ENCODE measurements at regions of chr10 and their contacts with region 1.

Region 1: DNA sequence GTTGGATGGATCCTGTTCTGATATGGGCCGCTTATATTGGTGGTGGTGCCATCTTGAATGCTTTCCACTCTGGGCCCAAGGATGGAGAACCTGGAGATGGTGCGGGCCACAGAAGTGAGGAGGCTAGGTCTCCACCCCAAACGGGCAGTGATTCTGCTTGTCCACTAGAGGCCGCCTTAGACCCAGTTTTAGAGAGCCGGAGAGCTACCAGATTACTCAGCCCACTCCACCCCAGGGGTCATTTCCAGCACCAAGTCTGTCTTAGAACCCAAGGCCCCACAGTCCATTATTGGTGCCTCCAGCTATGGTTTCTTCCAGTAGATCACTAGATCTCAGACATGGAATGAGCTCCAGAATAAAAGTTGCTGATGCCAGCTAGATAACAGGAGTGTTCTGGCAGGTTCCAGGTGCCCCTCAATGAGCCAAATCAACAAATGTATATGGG is 11.8 kb upstream of the CAMK2G start:
- DNase-seq: no peak
- H3K4me3 ChIP-seq: no peak overlapping the region
- H3K27ac ChIP-seq: peak overlapping the region; percentile 82 to 87 (median 85)
- H3K4me1 ChIP-seq: peaks cover 32 to 35% (median 34%) of the 10 kb centered on the region in 4 donors
- H3K27me3 ChIP-seq: no peaks in the 10 kb centered on the region
- CTCF ChIP-seq: peak; percentile 83 to 93 (median 91)
- EP300 ChIP-seq: no peak
- POLR2A ChIP-seq: no peak

Region 2: DNA sequence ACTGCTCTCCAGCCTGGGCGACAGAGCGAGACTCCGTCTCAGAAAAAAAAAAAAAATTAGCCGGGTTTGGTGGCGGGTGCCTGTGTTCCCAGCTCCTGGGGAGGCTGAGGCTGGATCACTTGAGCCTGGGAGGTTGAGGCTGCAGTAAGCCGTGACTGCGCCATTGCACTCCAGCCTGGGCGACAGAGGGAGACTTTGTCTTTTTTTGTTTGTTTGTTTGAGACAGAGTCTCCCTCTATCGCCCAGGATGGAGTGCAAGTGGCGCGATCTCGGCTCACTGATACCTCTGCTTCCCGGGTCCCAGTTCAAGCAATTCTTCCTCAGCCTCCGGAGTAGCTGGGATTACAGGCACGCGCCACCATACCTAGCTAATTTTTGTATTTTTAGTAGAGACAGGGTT is 780.7 kb before region 1 on chr10:
- intact Hi-C with region 1: no loop called
- DNase-seq: no peak
- H3K4me3 ChIP-seq: no peak overlapping the region
- H3K27ac ChIP-seq: no peak overlapping the region
- H3K4me1 ChIP-seq: no peaks in the 10 kb centered on the region
- H3K27me3 ChIP-seq: no peaks in the 10 kb centered on the region
- CTCF ChIP-seq: no peak
- EP300 ChIP-seq: no peak
- POLR2A ChIP-seq: no peak

Region 3: DNA sequence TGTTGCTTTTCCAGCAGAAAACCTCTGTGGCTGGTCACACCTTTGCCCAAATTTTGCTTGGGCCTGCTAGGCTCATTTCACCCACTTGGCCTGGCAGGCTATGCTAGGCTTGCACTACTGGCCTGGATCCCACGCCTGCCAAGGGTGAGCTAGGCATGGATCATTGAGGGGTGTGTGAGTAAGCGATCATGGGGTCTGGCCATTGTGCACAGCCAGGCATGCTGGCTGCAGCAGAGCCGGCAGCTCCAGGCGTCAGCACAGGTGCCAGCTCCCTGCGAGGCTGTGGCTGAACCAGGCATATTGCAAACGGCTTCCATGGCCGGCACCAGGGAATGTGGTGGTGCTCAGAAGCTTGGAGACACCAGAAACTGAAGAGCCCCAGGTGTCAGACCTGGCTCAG is 546.7 kb before region 1 on chr10:
- intact Hi-C with region 1: no loop called
- DNase-seq: no peak
- H3K4me3 ChIP-seq: no peak overlapping the region
- H3K27ac ChIP-seq: no peak overlapping the region
- H3K4me1 ChIP-seq: no peaks in the 10 kb centered on the region
- H3K27me3 ChIP-seq: no peaks in the 10 kb centered on the region
- CTCF ChIP-seq: no peak
- EP300 ChIP-seq: no peak
- POLR2A ChIP-seq: no peak

Region 4: GRCh38 chr10:73940634-73941221 is 54.6 kb after region 1 on chr10:
- intact Hi-C with region 1: loop called (anchors 1 kb)
- DNase-seq: peak; percentile 94
- H3K4me3 ChIP-seq: peak overlapping the region; percentile 7 to 23 (median 22)
- H3K27ac ChIP-seq: peak overlapping the region in 3 of 4 donors; percentile 53 to 61 (median 58)
- H3K4me1 ChIP-seq: peaks cover 17 to 28% (median 27%) of the 10 kb centered on the region in 4 donors
- H3K27me3 ChIP-seq: no peaks in the 10 kb centered on the region
- CTCF ChIP-seq: peak in 2 of 3 experiments; percentile 88 to 96
- EP300 ChIP-seq: no peak
- POLR2A ChIP-seq: no peak

Measured in esophagus muscularis mucosa (tissue), 4 donors.